ENCODE measurements at regions of chr20 and their contacts with region 1.

Region 1: DNA sequence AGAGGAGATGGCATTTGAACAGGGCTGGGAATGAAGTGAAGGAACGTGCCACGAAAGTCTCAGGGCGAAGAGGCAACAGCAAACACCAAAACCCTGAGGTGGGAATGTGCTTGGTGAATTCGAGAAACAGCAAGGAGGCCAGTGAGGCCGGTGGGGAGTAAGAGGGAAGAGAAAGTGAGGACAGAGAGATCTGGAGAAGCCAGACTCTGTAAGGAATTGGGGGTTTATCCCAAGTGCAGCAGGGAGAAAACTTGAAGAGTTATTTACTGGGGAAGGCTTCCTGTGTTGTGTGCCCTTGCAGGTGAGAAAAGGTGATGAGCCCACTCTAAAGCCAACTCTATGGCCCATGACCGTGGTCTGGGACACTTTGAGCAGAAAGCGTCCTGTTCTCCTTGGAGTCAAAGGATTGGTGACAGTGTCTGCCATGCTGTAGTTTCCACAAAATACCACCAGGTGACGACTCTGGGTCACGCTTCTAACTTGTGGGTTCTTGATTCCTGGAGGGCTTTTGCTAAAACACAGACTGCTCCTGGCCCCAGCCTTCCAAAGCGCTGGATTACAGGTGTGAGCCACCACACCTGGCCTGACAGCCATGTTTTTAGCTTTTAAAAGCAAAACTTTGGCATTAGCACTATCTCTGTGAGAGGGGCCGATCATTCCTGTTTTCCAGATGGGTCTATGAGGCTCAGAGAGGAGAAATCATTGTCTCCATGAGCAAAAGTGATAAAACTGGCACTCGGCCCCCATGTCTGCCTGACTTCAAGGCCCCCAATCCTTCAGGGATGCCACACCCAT is 18.0 kb upstream of the CSNK2A1 start:
- DNase-seq: peak; percentile 45 to 66
- ATAC-seq: peak; percentile 76 to 91 (median 82)
- H3K4me3 ChIP-seq: no peak overlapping the region
- H3K27ac ChIP-seq: no peak overlapping the region
- H3K4me1 ChIP-seq: peaks cover 4% of the 10 kb centered on the region
- H3K27me3 ChIP-seq: no peaks in the 10 kb centered on the region
- CTCF ChIP-seq: peak; percentile 96

Region 2: DNA sequence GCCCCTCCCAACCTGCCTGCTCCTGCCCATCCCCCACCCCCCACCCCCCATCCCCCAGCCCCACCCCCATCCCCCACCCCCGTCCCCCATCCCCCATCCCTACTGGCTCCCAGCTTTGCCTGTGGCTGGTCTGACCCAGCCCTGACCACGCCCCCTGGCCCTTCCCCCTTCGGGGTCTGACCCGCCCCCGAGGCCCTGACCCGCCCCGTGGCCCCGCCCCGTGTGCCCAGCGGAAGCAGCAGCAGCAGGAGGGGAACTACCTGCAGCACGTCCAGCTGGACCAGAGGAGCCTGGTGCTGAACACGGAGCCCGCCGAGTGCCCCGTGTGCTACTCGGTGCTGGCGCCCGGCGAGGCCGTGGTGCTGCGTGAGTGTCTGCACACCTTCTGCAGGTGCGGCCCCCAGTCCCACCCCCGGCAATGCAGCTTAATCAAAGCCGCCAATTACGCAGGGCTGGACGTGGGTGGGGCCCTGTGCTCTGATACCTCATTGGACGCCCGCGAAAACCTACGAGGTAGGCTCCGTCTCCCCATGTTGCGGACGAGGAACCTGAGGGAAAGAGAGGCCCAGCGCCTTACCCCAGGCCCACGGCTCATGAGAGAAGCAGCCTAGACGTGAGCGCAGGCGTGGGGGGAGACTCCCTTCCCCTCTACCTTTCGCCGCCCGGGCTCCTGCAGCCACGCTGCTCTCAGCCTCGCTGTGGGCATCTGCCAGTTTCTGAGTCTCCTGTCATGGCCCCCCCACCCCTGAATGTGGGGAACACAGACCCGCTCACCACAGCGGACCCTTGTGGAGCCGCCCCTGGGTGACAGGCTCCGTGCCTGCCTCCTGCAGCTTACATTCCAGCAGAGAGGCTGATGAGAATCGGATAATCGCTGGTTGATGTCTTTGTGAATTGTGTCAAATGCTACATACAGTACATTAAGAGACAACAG is 140.7 kb before region 1 on chr20:
- intact Hi-C with region 1: no loop called
- DNase-seq: no peak
- ATAC-seq: no peak
- H3K4me3 ChIP-seq: no peak overlapping the region
- H3K27ac ChIP-seq: no peak overlapping the region
- H3K4me1 ChIP-seq: peaks cover 19% of the 10 kb centered on the region
- H3K27me3 ChIP-seq: no peaks in the 10 kb centered on the region
- CTCF ChIP-seq: no peak

Region 3: GRCh38 chr20:645318-646106 is 83.9 kb after region 1 on chr20:
- intact Hi-C with region 1: loop called (anchors 1 to 5 kb)
- DNase-seq: peak; percentile 63 to 83
- ATAC-seq: peak; percentile 58 to 86 (median 84)
- H3K4me3 ChIP-seq: no peak overlapping the region
- H3K27ac ChIP-seq: peak overlapping the region; percentile 42
- H3K4me1 ChIP-seq: peaks cover 6% of the 10 kb centered on the region
- H3K27me3 ChIP-seq: peaks cover 0 to 7% (median 4%) of the 10 kb centered on the region in 3 donors
- CTCF ChIP-seq: peak; percentile 87

Region 4: DNA sequence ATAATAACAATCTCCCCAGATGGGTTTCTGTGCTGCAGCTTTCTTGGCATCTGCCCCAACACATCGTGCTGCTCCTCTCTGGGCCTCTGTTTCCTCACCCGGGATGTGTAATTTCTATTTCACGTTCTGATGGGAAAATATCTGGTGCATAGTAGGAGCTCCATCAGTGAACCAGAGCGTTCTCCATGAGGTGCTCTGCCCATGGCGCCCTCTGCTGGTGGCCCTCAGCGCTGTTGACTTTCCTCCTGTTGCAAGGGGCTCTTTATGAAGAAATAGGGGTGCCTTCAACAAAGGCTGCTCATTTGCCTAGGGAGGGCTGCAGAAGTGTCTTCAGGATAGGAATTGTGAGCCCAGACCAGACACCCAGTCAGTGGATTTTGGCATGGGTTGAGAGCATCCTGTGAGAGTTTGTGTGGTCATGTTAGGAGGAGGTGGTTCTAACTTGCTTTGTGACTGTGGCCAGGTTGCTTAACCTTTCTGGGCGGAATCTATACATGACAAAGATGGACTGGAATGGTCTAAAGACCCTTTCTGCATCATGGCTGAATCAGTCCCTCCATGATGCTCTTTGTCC is 105.8 kb after region 1 on chr20:
- intact Hi-C with region 1: loop called (anchors 2 to 5 kb)
- DNase-seq: peak; percentile 72 to 82
- ATAC-seq: peak; percentile 49 to 86 (median 76)
- H3K4me3 ChIP-seq: no peak overlapping the region
- H3K27ac ChIP-seq: no peak overlapping the region
- H3K4me1 ChIP-seq: peaks cover 14% of the 10 kb centered on the region
- H3K27me3 ChIP-seq: peaks cover 0 to 31% (median 16%) of the 10 kb centered on the region in 3 donors
- CTCF ChIP-seq: peak; percentile 74

Region 5: GRCh38 chr20:736897-737296 is 175.3 kb after region 1 on chr20:
- intact Hi-C with region 1: loop called (anchors 1 to 2 kb)
- DNase-seq: no peak
- ATAC-seq: no peak
- H3K4me3 ChIP-seq: no peak overlapping the region
- H3K27ac ChIP-seq: no peak overlapping the region
- H3K4me1 ChIP-seq: no peaks in the 10 kb centered on the region
- H3K27me3 ChIP-seq: peaks cover 0 to 2% (median 0%) of the 10 kb centered on the region in 3 donors
- CTCF ChIP-seq: no peak

Measured in psoas muscle (tissue), 8 donors.